GM13976 (cell line): ENCODE measurements at regions of chr3 and their contacts with region 1.

Region 1: DNA sequence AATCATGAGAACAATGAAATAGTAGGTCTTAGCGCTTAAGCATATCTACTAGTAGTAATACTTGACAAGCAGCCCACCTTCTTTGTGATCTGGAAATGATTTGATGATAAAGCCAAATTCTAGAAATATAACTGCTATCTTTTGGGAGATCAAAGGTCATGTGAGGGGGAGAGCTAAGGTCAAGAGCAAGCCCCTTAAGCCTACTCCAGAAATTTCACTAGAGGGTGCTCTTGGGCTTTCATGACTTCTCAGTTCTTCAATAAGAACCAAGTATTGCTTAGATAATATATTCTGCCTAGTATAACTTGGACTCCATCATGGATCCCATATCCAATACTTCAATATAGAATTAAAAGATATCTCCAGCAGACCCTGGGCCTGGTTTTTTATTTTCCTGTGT is 319.6 kb downstream of the ZBTB20 start:
- DNase-seq: peak; percentile 23
- CTCF ChIP-seq: peak; percentile 36

Region 2: DNA sequence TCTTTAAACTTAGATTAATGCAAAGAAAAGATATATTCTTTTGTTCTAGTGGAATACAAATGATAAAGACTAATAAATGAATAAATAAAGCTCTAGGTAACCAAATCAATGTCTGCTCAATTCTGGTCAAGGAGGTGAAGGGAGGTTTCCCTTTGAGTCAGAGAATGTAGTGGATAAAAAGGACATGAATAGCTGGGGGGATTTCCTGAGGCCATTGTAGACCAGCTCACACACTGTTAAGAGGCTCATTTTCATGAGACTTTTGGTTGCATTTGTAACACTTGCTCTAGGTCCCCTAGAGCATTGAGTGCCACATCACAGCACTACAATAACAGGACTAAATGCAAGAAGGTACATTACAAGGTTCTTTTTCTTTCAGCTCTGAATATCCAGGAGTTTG is 362.9 kb before region 1 on chr3:
- in situ Hi-C with region 1: no loop called
- DNase-seq: peak; percentile 45
- CTCF ChIP-seq: no peak

Region 3: DNA sequence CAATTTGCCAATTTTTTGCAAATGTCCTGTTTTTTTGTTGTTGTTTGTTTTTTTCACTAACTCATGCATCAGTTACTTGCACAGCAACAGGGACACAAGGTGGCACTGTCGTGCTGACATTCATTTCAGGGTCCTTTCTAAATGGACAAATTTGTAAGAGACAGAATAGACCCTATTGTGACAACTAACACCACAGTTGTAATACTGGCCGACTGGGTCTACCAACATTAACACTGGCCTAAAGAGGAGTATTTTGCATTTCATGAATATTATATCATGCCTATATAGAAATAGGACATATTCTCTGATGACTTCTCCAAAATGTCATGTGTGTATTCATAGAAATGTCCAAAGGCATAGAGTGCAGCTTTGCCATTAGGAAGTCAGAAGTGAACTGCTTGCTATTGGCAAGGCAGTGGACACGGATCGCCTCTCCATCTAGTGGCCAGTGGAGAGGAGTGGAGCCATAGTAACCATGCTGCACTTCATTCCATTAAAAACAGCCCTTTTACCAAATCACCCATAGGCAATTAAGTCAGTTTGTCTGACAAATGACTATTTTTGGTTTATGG is 264.8 kb after region 1 on chr3:
- in situ Hi-C with region 1: loop called (anchors 25 kb)
- DNase-seq: peak; percentile 8
- CTCF ChIP-seq: peak; percentile 76

Region 4: DNA sequence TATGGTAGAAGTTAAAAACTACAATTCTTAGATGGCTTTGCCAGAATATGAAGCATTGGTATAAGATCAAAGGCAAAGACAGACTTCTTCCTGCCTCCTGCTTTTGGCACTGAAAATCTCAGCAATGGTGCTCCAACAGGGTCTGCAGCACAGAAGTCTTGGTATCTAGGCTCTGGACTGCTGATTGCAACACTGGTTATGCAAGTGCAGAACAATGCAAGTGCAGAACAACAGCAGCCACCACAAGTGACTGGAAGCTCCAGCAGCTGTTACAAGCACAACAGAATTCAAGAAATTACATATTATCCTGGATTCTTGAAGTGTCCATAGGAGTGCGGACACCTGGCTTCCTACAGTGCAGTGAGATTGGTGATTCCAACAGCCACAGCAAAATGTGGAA is 285.9 kb after region 1 on chr3:
- in situ Hi-C with region 1: no loop called
- DNase-seq: no peak
- CTCF ChIP-seq: no peak

Region 5: DNA sequence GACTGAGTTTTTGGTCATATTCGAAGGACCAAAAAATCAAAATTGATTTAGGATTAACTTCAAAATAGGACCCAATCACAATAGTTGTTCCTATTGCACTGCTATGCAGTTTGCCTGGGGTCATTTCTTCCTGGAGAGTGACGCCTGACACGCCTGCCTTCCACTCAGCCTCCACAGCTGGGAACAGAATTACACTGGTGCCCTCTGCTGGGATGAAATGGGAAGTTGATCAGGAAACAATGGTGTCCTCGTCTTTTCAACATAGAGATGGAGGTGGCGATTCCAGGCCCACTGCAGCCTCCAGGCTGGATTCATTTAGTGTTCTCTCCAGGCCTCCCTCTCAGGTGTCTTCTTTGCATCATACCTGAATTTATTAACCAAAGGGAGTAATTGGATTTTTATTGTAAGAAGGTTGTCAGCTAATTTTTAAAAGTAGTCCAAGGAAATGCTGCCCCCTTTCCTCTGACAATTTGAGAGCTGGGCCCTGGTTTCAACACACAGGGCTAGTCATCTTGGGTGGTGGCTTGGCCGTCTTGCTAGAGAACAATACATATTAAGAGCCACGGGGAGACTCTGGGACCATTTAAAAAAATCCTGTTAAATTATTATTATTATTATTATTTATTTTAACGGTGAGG is 865.5 kb after region 1 on chr3:
- in situ Hi-C with region 1: loop called (anchors 25 kb)
- DNase-seq: peak; percentile 60
- CTCF ChIP-seq: peak; percentile 67

Region 6: DNA sequence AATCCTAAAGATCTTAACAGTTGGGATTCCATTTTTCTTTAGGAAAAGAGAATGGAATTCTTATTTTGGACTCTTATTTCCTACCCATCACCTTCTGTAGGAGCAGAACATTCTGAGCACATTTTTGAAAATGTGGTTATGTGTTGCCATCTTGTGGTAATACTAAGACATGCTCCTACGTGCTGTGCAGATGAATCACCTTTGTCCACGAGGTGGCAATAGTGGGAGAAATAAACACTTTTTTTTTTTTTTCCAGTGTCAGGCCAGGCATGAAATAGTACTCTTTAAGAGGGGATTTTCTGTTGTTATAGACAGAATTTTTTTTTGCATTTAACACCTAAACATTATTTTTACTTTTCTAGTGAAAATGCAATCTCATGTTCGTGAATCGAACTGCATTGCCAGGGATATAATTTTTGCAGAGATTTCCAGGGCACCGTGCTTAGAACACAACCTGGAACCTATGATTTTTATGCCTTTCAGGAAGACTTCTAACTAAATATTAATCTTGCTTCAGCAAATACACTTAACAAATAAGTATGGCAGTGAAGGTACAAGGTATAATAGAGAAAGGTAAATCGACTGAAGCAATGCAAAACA is 992.4 kb after region 1 on chr3:
- in situ Hi-C with region 1: loop called (anchors 25 kb)
- DNase-seq: peak; percentile 67
- CTCF ChIP-seq: peak; percentile 96